ENCODE measurements at regions of chr19 and their contacts with region 1.

Region 1: GRCh38 chr19:40403262-40403984 is 9.8 kb downstream of the PRX start:
- DNase-seq: peak; percentile 90
- H3K4me3 ChIP-seq: peak overlapping the region; percentile 43 to 67 (median 47)
- H3K27ac ChIP-seq: no peak overlapping the region
- H3K4me1 ChIP-seq: peaks cover 2% of the 10 kb centered on the region
- H3K27me3 ChIP-seq: no peaks in the 10 kb centered on the region
- CTCF ChIP-seq: no peak
- POLR2A ChIP-seq: no peak

Region 2: GRCh38 chr19:40090241-40091204 is 312.9 kb before region 1 on chr19 and contains the start of gene ZNF780A:
- CTCF ChIA-PET with region 1: no interaction called
- POLR2A ChIA-PET with region 1: no interaction called
- dilution Hi-C with region 1: no loop called
- intact Hi-C with region 1: loop called (anchors 5 kb)
- DNase-seq: peak; percentile 80
- H3K4me3 ChIP-seq: peak within 1 kb of the TSS; percentile 46 to 86 (median 72)
- H3K27ac ChIP-seq: peak within 1 kb of the TSS; percentile 67
- H3K4me1 ChIP-seq: peaks cover 9% of the 10 kb centered on the region
- H3K27me3 ChIP-seq: no peaks in the 10 kb centered on the region
- CTCF ChIP-seq: no peak
- POLR2A ChIP-seq: peak; percentile 20
- total RNA-seq, gene ZNF780A: 9.9 and 11.6 TPM in 2 replicates

Region 3: GRCh38 chr19:40331069-40331468 is 72.4 kb before region 1 on chr19:
- CTCF ChIA-PET with region 1: no interaction called
- POLR2A ChIA-PET with region 1: no interaction called
- dilution Hi-C with region 1: no loop called
- intact Hi-C with region 1: no loop called
- DNase-seq: no peak
- H3K4me3 ChIP-seq: no peak overlapping the region
- H3K27ac ChIP-seq: no peak overlapping the region
- H3K4me1 ChIP-seq: no peaks in the 10 kb centered on the region
- H3K27me3 ChIP-seq: no peaks in the 10 kb centered on the region
- CTCF ChIP-seq: no peak
- POLR2A ChIP-seq: no peak

Region 4: DNA sequence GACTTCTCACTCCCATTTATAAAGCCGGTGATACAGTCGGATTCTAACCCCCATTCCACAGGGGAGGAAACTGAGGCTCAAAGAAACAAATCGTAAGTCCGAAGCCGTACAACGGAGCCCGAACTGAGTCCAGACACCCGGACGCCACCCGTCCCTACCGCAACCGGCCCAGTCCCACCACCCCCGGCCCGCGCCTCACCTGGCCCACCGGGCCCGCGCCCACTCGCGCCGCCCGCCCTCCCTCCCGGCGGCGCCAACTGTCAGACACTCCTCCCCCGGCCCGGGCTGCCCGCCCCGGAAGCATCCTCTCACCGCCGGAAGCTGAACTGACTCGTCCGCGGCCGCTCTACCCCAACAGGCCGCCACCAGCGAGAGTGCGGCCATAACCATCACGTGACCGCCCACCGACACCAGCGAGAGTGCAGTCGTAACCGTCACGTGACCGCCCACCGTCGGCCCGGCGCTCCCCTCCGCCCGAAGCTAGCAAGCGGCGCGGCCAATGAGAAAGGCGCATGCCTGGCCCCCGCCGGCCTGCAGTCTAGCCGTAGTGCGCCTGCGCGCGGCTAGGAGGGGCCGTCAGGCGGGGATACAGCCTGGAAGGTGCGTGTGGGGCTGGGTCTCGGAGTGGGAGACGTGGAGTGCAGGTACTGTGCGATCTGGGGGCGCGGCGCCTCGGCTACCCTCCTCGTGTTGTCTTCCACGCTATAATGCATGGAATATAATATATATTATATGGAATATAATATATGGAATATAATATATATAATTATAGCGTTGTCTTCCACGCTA is 55.1 kb before region 1 on chr19 and contains the starts of genes C19orf47 and PLD3:
- CTCF ChIA-PET with region 1: no interaction called
- POLR2A ChIA-PET with region 1: no interaction called
- dilution Hi-C with region 1: no loop called
- intact Hi-C with region 1: loop called (anchors 5 kb)
- DNase-seq: peak; percentile 99
- H3K4me3 ChIP-seq: peak within 1 kb of the TSS; percentile 65 to 98 (median 95)
- H3K27ac ChIP-seq: peak within 1 kb of the TSS; percentile 83
- H3K4me1 ChIP-seq: peaks cover 13% of the 10 kb centered on the region
- H3K27me3 ChIP-seq: no peaks in the 10 kb centered on the region
- CTCF ChIP-seq: no peak
- POLR2A ChIP-seq: peak; percentile 98
- total RNA-seq, gene C19orf47: 16.4 and 17.3 TPM in 2 replicates
- total RNA-seq, gene PLD3: 166 and 172 TPM in 2 replicates

Region 5: DNA sequence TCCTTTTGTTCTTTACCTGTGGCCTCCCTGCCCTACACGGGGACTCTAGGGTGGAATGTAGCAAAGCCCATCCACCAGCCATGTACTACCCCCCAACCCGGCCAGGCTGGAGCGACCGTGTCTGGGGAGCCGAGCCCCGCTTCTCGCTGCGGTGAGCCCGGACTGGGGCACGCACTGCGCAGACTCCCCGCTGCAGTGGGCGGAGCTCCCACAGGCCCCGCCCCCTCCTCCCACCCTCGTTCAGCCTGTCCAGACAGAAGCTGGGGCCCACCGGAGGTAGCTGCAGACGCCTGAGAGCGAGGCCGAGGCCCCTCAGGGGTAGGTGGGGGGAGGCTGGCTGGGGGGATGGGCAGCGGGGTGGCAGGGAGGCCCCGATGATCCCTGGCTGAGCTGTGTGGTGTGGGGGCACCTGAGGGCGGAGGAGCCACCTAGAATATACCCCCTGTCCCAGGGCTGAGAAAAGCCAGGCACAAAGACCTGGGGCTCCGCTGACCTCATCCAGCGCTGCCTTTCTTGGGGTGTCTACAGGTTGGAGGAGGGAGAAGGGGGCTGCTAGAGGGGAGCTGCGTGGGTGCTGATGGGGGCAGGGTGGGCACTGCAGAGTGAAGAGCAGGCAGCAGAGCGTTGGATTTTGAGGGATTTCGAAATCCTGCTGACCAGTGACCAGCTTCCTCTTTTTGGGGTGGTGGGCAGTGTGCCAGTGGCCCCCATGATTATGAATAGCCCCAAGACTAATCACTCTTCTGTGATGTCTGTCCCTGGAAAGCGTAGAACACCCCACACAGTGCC is 37.6 kb before region 1 on chr19:
- CTCF ChIA-PET with region 1: interaction called, 4 read pairs
- POLR2A ChIA-PET with region 1: no interaction called
- dilution Hi-C with region 1: no loop called
- intact Hi-C with region 1: loop called (anchors 5 kb)
- DNase-seq: peak; percentile 89
- H3K4me3 ChIP-seq: peak overlapping the region; percentile 32 to 73 (median 63)
- H3K27ac ChIP-seq: no peak overlapping the region
- H3K4me1 ChIP-seq: peaks cover 3% of the 10 kb centered on the region
- H3K27me3 ChIP-seq: no peaks in the 10 kb centered on the region
- CTCF ChIP-seq: no peak
- POLR2A ChIP-seq: peak; percentile 71